Left ventricle myocardium inferior (tissue), 1 donor: ENCODE measurements at regions of chr17 and their contacts with region 1.

Region 1: DNA sequence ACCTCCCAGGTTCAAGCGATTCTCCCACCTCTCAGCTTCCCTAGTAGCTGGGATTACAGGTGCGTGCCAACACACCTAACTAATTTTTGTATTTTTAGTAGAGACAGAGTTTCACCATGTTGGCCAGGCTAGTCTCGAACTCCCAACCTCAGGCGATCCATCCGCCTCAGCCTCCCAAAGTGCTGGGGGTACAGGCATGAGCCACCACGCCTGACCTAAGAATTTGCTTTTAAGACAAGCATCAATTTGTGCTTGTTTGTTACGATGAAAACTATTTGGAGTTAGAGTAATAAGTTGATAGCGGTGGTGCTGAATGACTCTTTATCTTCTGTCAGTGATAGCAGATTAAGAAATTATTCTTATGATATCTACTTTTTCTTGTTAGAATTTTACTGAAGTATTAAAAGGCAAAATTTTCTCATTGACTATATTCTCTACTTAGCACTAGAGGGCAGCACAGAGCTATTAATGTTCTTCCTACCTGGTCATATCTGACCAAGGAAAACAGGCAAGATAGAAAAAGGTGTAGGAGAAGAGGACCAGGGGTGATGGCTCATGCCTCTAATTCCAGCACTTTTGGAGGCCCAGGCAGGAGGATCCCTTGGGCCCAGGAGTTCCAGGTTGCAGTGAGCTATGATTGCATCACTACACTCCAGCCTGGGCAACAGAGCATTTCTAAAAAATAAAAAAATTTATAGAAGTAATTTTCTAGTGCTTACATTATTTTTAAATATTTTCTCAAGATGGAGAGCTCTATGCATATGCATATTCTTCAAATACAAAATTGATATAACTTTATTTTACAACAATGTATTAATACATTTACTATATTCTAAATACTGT is 24.5 kb downstream of the STXBP4 start:
- DNase-seq: no peak
- H3K4me3 ChIP-seq: no peak overlapping the region
- H3K27ac ChIP-seq: no peak overlapping the region
- H3K4me1 ChIP-seq: no peaks in the 10 kb centered on the region
- H3K27me3 ChIP-seq: no peaks in the 10 kb centered on the region
- CTCF ChIP-seq: peak; percentile 70

Region 2: GRCh38 chr17:54906683-54907082 is 86.3 kb before region 1 on chr17:
- intact Hi-C with region 1: no loop called
- DNase-seq: no peak
- H3K4me3 ChIP-seq: no peak overlapping the region
- H3K27ac ChIP-seq: no peak overlapping the region
- H3K4me1 ChIP-seq: peaks cover 2% of the 10 kb centered on the region
- H3K27me3 ChIP-seq: no peaks in the 10 kb centered on the region
- CTCF ChIP-seq: no peak

Region 3: DNA sequence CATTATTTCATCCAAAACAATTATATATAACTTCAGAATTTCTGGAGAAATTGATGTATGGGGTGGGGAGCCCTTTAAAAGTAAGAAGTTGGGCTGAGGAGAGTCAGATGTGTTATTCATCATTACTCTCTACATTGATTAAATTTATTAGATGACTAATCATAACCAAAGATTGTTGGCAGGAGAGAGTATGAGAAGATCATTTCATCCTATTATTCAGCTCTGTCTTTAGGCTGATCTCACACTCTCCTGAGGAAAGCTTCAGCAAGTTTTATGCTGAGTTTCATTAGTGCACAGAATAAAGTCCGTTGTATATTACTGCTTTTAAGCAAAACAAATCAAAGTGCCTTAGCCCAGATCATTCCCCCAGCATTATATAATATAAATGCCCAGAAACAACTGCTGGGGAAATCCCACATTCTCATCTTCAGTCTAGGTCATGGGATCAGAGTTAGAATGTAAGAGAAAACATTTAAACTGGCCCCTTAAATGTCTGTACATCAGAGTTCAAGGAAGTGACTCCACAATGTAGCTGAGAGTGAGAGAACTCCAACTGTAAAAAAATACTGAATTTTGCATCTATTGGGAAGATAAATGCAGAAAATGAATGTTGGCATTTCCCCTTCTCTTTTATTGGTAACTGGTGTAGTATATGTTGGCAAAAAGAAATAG is 141.6 kb after region 1 on chr17:
- intact Hi-C with region 1: no loop called
- DNase-seq: no peak
- H3K4me3 ChIP-seq: no peak overlapping the region
- H3K27ac ChIP-seq: no peak overlapping the region
- H3K4me1 ChIP-seq: no peaks in the 10 kb centered on the region
- H3K27me3 ChIP-seq: no peaks in the 10 kb centered on the region
- CTCF ChIP-seq: no peak

Region 4: GRCh38 chr17:55348749-55349354 is 355.8 kb after region 1 on chr17:
- intact Hi-C with region 1: loop called (anchors 5 kb)
- DNase-seq: no peak
- H3K4me3 ChIP-seq: no peak overlapping the region
- H3K27ac ChIP-seq: no peak overlapping the region
- H3K4me1 ChIP-seq: no peaks in the 10 kb centered on the region
- H3K27me3 ChIP-seq: no peaks in the 10 kb centered on the region
- CTCF ChIP-seq: peak; percentile 88